Natural killer cell (primary cell): ENCODE measurements at regions of chr18 and their contacts with region 1.

Region 1: DNA sequence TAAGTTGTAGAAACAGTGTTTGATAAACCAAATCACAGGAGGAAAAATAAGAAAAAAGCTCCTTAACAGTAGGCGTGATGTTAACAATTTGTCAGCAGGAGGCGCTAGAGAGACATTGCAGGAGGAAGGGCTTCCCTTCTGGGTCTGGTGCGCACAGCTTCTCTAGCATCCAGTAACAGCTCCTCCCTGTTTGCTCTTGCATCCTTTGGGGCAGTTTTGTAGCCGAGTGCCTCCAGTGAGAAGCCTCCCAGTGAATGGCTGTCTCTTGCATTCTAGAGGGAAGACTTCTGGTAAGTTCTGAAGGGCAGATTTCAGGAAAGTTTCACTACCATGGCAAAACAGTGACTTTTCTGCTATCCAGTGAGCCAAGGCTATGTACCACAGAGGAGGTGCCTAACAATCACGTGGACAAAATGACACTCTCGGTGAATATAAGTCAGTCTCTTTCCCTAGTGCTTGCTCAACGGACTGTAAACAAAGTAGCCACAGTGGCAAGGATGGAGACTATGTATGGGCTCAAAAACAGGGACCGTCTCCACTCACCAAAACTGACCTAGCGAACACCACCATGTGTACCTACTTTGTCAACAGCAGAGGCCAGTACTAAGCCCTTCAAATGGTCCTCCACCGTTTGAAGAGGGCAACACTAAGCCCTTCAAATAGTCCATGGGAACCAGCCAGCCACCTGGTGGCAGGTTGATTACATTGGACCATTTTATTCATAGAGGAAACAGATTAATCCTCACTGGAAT is 9.6 kb upstream of the ZNF396 start:
- DNase-seq: peak; percentile 46 to 91
- ATAC-seq: peak; percentile 95 to 99 (median 98)
- H3K4me3 ChIP-seq: no peak overlapping the region
- H3K4me3 Mint-ChIP-seq: no peak overlapping the region
- H3K27ac ChIP-seq: no peak overlapping the region
- H3K27ac Mint-ChIP-seq: no peak overlapping the region
- H3K4me1 ChIP-seq: peaks cover 4% of the 10 kb centered on the region
- H3K4me1 Mint-ChIP-seq: peaks cover 5 to 9% of the 10 kb centered on the region in 2 donors
- H3K27me3 ChIP-seq: peaks cover 2% of the 10 kb centered on the region
- H3K27me3 Mint-ChIP-seq: peaks cover 24 to 31% of the 10 kb centered on the region in 2 donors
- CTCF ChIP-seq: peak; percentile 96

Region 2: GRCh38 chr18:35376393-35376741 is 10.4 kb before region 1 on chr18:
- intact Hi-C with region 1: no loop called
- DNase-seq: peak in 1 of 2 donors; percentile 45
- ATAC-seq: peak; percentile 53 to 73 (median 64)
- H3K4me3 ChIP-seq: peak overlapping the region; percentile 78
- H3K4me3 Mint-ChIP-seq: peak overlapping the region; percentile 89
- H3K27ac ChIP-seq: no peak overlapping the region
- H3K27ac Mint-ChIP-seq: peak overlapping the region; percentile 59 to 88
- H3K4me1 ChIP-seq: peaks cover 10% of the 10 kb centered on the region
- H3K4me1 Mint-ChIP-seq: peaks cover 5 to 13% of the 10 kb centered on the region in 2 donors
- H3K27me3 ChIP-seq: no peaks in the 10 kb centered on the region
- H3K27me3 Mint-ChIP-seq: no peaks in the 10 kb centered on the region
- CTCF ChIP-seq: no peak

Region 3: DNA sequence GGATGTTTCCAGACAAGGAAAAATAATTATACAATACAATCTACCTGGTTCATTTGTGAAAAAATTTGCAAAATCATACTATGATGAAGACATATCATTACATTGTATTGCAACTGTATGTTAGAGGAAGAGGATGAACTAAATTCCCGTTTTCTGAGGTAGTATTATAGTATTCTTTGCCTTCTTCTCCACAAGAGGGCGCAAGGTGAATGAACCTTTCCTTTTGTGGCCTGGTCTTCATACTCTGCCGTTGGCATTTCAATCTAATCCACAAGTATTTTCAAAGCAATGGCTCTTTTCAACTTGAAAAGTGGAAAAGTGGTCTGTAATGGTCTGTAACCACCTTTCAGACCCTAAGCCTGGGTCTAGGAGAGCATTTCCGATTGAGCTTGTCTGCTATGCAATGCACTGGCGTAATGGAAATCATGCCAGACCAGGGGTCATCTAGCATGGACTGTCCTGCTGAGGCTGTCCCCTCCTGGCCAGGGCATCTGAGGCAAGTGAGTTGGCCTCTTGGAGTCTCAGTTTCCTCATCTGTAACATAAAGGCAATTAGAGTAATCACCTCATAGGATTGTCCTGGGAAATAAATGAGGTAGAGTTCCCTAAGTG is 21.2 kb after region 1 on chr18:
- intact Hi-C with region 1: loop called (anchors 1 kb)
- DNase-seq: peak in 1 of 2 donors; percentile 79
- ATAC-seq: peak; percentile 79 to 88 (median 84)
- H3K4me3 ChIP-seq: no peak overlapping the region
- H3K4me3 Mint-ChIP-seq: no peak overlapping the region
- H3K27ac ChIP-seq: no peak overlapping the region
- H3K27ac Mint-ChIP-seq: no peak overlapping the region
- H3K4me1 ChIP-seq: peaks cover 17% of the 10 kb centered on the region
- H3K4me1 Mint-ChIP-seq: peaks cover 5 to 8% of the 10 kb centered on the region in 2 donors
- H3K27me3 ChIP-seq: no peaks in the 10 kb centered on the region
- H3K27me3 Mint-ChIP-seq: peaks cover 9 to 15% of the 10 kb centered on the region in 2 donors
- CTCF ChIP-seq: peak; percentile 89

Region 4: GRCh38 chr18:35573531-35573930 is 186.8 kb after region 1 on chr18:
- intact Hi-C with region 1: no loop called
- DNase-seq: peak in 1 of 2 donors; percentile 25
- ATAC-seq: peak; percentile 46 to 50 (median 50)
- H3K4me3 ChIP-seq: no peak overlapping the region
- H3K4me3 Mint-ChIP-seq: no peak overlapping the region
- H3K27ac ChIP-seq: peak overlapping the region; percentile 25
- H3K27ac Mint-ChIP-seq: no peak overlapping the region
- H3K4me1 ChIP-seq: peaks cover 3% of the 10 kb centered on the region
- H3K4me1 Mint-ChIP-seq: peaks cover 7 to 11% of the 10 kb centered on the region in 2 donors
- H3K27me3 ChIP-seq: no peaks in the 10 kb centered on the region
- H3K27me3 Mint-ChIP-seq: peaks cover 0 to 3% of the 10 kb centered on the region in 2 donors
- CTCF ChIP-seq: no peak